ENCODE measurements at regions of chr10 and their contacts with region 1.

Region 1: GRCh38 chr10:25713894-25714240 is 220.2 kb upstream of the MYO3A start:
- DNase-seq: no peak
- H3K4me3 ChIP-seq: no peak overlapping the region
- H3K27ac ChIP-seq: no peak overlapping the region
- H3K4me1 ChIP-seq: no peaks in the 10 kb centered on the region
- H3K27me3 ChIP-seq: no peaks in the 10 kb centered on the region
- CTCF ChIP-seq: no peak

Region 2: GRCh38 chr10:25113191-25114035 is 600.5 kb before region 1 on chr10:
- CTCF ChIA-PET with region 1: no interaction called
- POLR2A ChIA-PET with region 1: no interaction called
- intact Hi-C with region 1: loop called (anchors 2 kb)
- DNase-seq: peak; percentile 82
- H3K4me3 ChIP-seq: no peak overlapping the region
- H3K27ac ChIP-seq: no peak overlapping the region
- H3K4me1 ChIP-seq: no peaks in the 10 kb centered on the region
- H3K27me3 ChIP-seq: no peaks in the 10 kb centered on the region
- CTCF ChIP-seq: peak; percentile 89

Measured in A673 (cell line).